Right ventricle myocardium superior (tissue), 1 donor: ENCODE measurements at regions of chr9 and their contacts with region 1.

Region 1: GRCh38 chr9:107569171-107569570 is 79.6 kb upstream of the KLF4 start:
- DNase-seq: no peak
- ATAC-seq: no peak

Region 2: GRCh38 chr9:107523546-107523945 is 45.6 kb before region 1 on chr9:
- intact Hi-C with region 1: loop called (anchors 2 kb)
- DNase-seq: no peak
- ATAC-seq: no peak